Activated CD4-positive, alpha-beta memory T cell treated with anti-CD3 and anti-CD28 coated beads for 36 hours (primary cell): ENCODE measurements at regions of chr17 and their contacts with region 1.

Region 1: GRCh38 chr17:17496189-17497064 is at the start of gene RASD1:
- DNase-seq: peak; percentile 88
- H3K4me3 Mint-ChIP-seq: peak within 1 kb of the TSS; percentile 62
- H3K27ac Mint-ChIP-seq: no peak within 1 kb of the TSS
- H3K4me1 Mint-ChIP-seq: peaks cover 16% of the 10 kb centered on the region
- H3K27me3 Mint-ChIP-seq: peaks cover 7% of the 10 kb centered on the region
- total RNA-seq, gene RASD1: 0.27 to 0.33 TPM

Region 2: GRCh38 chr17:17356149-17356930 is 140.1 kb before region 1 on chr17:
- CTCF ChIA-PET with region 1: interaction called, 26 read pairs
- POLR2A ChIA-PET with region 1: interaction called, 4 read pairs
- intact Hi-C with region 1: loop called (anchors 1 kb)
- DNase-seq: peak; percentile 81
- H3K4me3 Mint-ChIP-seq: no peak overlapping the region
- H3K27ac Mint-ChIP-seq: no peak overlapping the region
- H3K4me1 Mint-ChIP-seq: peaks cover 2% of the 10 kb centered on the region
- H3K27me3 Mint-ChIP-seq: no peaks in the 10 kb centered on the region

Region 3: DNA sequence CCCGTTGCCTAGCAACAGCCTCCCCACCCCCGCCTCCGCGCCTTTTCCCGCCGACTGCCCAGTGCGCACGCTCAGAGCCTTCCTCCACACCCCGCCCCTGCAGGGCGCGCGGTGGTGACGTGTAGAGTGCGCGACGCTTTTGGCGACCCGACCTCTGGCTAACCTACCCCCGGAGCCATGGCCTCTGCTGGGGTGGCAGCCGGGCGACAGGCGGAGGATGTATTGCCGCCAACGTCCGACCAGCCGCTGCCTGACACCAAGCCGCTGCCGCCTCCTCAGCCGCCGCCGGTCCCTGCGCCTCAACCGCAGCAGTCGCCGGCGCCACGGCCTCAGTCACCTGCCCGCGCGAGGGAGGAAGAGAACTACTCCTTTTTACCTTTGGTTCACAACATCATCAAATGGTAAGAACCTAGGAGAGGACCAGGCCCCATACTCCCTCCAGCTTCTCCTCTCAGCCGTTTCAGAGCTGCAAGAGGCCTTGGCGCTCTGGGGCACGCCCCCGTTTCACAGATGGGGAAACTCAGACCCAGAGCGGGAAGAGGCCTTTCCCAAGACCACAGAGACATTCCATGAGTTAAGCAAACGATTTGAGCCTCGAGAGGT is 19.5 kb before region 1 on chr17 and contains the start of gene MED9:
- CTCF ChIA-PET with region 1: interaction called, 13 read pairs
- POLR2A ChIA-PET with region 1: interaction called, 3 read pairs
- intact Hi-C with region 1: loop called (anchors 2 kb)
- DNase-seq: peak; percentile 96
- H3K4me3 Mint-ChIP-seq: peak within 1 kb of the TSS; percentile 91
- H3K27ac Mint-ChIP-seq: peak within 1 kb of the TSS; percentile 80
- H3K4me1 Mint-ChIP-seq: peaks cover 48% of the 10 kb centered on the region
- H3K27me3 Mint-ChIP-seq: no peaks in the 10 kb centered on the region
- total RNA-seq, gene MED9: 12.1 to 12.2 TPM

Region 4: GRCh38 chr17:17511881-17512858 is 15.7 kb after region 1 on chr17:
- CTCF ChIA-PET with region 1: interaction called, 15 read pairs
- POLR2A ChIA-PET with region 1: no interaction called
- intact Hi-C with region 1: no loop called
- DNase-seq: no peak
- H3K4me3 Mint-ChIP-seq: no peak overlapping the region
- H3K27ac Mint-ChIP-seq: no peak overlapping the region
- H3K4me1 Mint-ChIP-seq: no peaks in the 10 kb centered on the region
- H3K27me3 Mint-ChIP-seq: no peaks in the 10 kb centered on the region

Region 5: GRCh38 chr17:17523001-17523730 is 26.7 kb after region 1 on chr17:
- CTCF ChIA-PET with region 1: no interaction called
- POLR2A ChIA-PET with region 1: no interaction called
- intact Hi-C with region 1: no loop called
- DNase-seq: no peak
- H3K4me3 Mint-ChIP-seq: no peak overlapping the region
- H3K27ac Mint-ChIP-seq: no peak overlapping the region
- H3K4me1 Mint-ChIP-seq: no peaks in the 10 kb centered on the region
- H3K27me3 Mint-ChIP-seq: no peaks in the 10 kb centered on the region

Region 6: GRCh38 chr17:17591355-17592298 is 95.2 kb after region 1 on chr17 and contains the start of gene PEMT:
- CTCF ChIA-PET with region 1: interaction called, 20 read pairs
- POLR2A ChIA-PET with region 1: interaction called, 9 read pairs
- intact Hi-C with region 1: loop called (anchors 1 kb)
- DNase-seq: peak; percentile 96
- H3K4me3 Mint-ChIP-seq: peak within 1 kb of the TSS; percentile 88
- H3K27ac Mint-ChIP-seq: peak within 1 kb of the TSS; percentile 88
- H3K4me1 Mint-ChIP-seq: peaks cover 23% of the 10 kb centered on the region
- H3K27me3 Mint-ChIP-seq: no peaks in the 10 kb centered on the region
- total RNA-seq, gene PEMT: 38.3 to 41.1 TPM

Region 7: DNA sequence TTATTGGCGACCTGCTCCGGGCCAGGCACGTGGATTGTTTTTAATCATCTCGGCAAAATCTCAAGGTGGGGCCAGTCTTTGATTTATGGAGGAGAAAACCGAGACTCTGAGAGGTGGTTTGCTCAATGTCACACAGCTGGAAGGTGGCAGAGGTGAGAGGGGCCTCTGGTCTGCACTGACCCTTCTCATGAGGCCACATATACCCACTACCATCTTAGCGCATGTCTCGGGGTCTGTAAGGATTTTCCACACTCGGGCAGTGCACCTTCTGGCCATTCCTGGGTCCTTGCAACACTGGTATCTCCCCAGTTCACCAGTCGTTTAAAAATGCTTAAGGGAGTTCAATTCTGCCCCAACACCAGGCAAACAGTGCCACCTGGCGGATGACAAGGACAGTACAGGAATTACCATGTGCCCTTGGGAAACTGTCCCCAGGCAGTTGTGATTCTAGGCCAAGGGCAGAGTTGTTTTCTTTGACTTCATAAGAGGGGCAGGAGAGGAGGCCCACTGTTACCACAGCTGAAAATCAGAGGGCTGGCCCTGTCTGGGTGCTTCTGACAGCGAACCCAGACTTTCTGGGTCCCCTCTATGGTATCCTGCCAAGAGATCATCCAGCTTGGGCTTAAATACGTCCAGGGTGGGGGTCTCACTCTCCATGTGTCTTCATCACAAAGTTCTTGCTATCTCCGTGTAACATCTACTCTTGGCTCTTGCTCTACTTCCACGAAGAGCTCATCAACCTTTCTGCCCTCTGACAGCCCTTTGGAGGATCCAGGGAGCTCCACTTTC is 145.4 kb after region 1 on chr17:
- CTCF ChIA-PET with region 1: interaction called, 87 read pairs
- POLR2A ChIA-PET with region 1: interaction called, 3 read pairs
- intact Hi-C with region 1: loop called (anchors 1 kb)
- DNase-seq: peak; percentile 86
- H3K4me3 Mint-ChIP-seq: no peak overlapping the region
- H3K27ac Mint-ChIP-seq: no peak overlapping the region
- H3K4me1 Mint-ChIP-seq: no peaks in the 10 kb centered on the region
- H3K27me3 Mint-ChIP-seq: peaks cover 5% of the 10 kb centered on the region